Activated CD4-positive, alpha-beta T cell treated with anti-CD3 and anti-CD28 coated beads for 36 hours (primary cell): ENCODE measurements at regions of chr10 and their contacts with region 1.

Region 1: DNA sequence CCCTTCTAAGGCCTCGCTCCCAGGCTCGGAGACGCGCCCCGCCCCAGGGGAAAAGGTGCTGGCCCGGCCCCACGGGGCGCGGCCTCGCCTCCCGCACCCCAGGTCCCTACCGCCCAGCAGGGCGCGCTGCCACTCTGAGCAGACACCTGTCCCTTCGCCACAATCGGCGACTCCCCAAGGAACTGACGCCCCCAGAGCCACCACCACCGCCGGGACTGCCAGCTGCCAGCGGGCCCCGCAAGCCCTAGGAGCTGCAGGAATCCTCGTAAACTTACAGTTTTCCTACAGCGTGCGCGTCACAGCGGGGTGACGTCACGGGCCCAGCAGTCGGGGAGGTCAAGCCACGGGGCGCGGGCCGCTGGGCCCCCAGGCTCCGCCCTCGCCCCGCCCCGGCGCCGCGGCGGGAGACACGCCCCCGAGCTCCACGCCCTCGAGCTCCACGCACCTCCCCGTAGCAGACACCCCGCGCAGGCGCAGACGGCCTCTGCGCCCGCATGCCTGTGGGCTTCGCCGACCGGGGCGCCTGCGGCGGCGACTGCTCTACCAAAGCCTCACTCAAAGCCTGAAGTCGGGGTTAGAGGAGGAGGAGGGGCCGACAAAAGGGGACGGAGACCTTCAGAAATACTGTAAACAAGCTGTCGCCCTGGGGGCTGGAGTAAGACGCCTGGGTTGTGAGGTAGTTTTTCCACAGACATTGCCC is at the start of gene ZNF438:
- DNase-seq: peak; percentile 96
- ATAC-seq: peak; percentile 81
- H3K4me3 Mint-ChIP-seq: peak within 1 kb of the TSS; percentile 81
- H3K27ac Mint-ChIP-seq: peak within 1 kb of the TSS; percentile 99
- H3K4me1 Mint-ChIP-seq: peaks cover 19% of the 10 kb centered on the region
- H3K27me3 Mint-ChIP-seq: no peaks in the 10 kb centered on the region
- total RNA-seq, gene ZNF438: 3.1 to 3.7 TPM

Region 2: GRCh38 chr10:30701451-30702173 is 330.1 kb before region 1 on chr10:
- CTCF ChIA-PET with region 1: no interaction called
- POLR2A ChIA-PET with region 1: no interaction called
- intact Hi-C with region 1: loop called in 1 of 2 experiments (anchors 1 kb)
- DNase-seq: peak; percentile 93
- ATAC-seq: peak; percentile 73
- H3K4me3 Mint-ChIP-seq: peak overlapping the region; percentile 86
- H3K27ac Mint-ChIP-seq: peak overlapping the region; percentile 90
- H3K4me1 Mint-ChIP-seq: peaks cover 87% of the 10 kb centered on the region
- H3K27me3 Mint-ChIP-seq: no peaks in the 10 kb centered on the region

Region 3: DNA sequence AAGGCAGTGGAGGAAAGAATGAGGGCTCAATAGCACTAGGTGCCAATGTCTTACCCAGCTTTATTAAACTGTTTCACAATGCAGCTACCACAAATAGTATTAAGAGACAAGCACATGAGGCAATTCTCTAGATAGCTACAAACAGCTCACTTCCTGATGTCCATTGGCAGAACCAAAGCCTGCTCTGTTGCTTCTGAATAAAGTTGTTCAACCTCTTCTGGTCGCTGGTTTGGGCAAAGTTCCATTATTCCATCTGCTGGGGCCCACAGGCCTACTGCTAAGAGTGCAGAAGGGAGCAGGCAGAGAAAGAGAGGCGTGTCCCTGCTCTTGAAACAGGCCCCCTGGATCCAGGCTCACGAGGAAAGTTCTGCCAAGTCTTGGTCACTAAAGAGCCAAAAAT is 173.9 kb before region 1 on chr10:
- CTCF ChIA-PET with region 1: no interaction called
- POLR2A ChIA-PET with region 1: no interaction called
- intact Hi-C with region 1: no loop called
- DNase-seq: no peak
- ATAC-seq: no peak
- H3K4me3 Mint-ChIP-seq: no peak overlapping the region
- H3K27ac Mint-ChIP-seq: no peak overlapping the region
- H3K4me1 Mint-ChIP-seq: peaks cover 2% of the 10 kb centered on the region
- H3K27me3 Mint-ChIP-seq: no peaks in the 10 kb centered on the region

Region 4: GRCh38 chr10:31101123-31101522 is 69.4 kb after region 1 on chr10:
- CTCF ChIA-PET with region 1: no interaction called
- POLR2A ChIA-PET with region 1: interaction called, 9 read pairs
- intact Hi-C with region 1: loop called in 1 of 2 experiments (anchors 2 kb)
- DNase-seq: peak; percentile 86
- ATAC-seq: peak; percentile 96
- H3K4me3 Mint-ChIP-seq: no peak overlapping the region
- H3K27ac Mint-ChIP-seq: peak overlapping the region; percentile 91
- H3K4me1 Mint-ChIP-seq: peaks cover 44% of the 10 kb centered on the region
- H3K27me3 Mint-ChIP-seq: no peaks in the 10 kb centered on the region

Region 5: DNA sequence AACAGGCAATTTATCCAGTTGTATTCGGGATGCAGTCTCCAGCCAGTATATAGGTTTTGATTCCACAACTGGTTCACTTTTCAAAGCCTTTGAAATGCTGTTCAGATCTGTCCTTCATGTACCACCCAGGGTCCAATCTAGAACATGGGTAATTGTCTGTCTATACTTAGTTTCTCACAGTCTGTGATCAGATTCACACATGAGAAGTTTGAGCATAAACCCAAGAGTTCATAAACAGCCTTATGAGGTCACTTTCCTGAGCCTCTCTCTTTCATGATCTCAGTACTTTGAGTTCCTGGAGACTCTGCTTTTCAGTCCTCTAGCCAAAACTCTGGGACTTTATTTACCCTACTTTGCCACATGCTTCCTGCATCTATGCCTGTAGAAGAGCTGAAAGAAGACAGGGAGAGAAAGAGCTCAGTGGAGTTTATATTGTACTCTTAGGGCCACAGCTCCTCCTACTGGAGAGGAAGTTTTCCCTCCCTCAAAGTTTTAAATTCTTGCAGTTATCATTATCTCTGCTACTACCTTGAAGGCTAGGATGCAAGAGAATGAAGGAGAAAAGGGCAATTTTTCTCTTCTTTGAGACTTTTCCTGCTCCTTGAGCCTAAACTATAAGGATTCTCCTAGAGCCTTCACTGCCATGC is 459.3 kb after region 1 on chr10:
- CTCF ChIA-PET with region 1: no interaction called
- POLR2A ChIA-PET with region 1: no interaction called
- intact Hi-C with region 1: loop called in 1 of 2 experiments (anchors 5 kb)
- DNase-seq: peak; percentile 32
- ATAC-seq: peak; percentile 51
- H3K4me3 Mint-ChIP-seq: no peak overlapping the region
- H3K27ac Mint-ChIP-seq: no peak overlapping the region
- H3K4me1 Mint-ChIP-seq: peaks cover 2% of the 10 kb centered on the region
- H3K27me3 Mint-ChIP-seq: no peaks in the 10 kb centered on the region

Region 6: GRCh38 chr10:31707093-31708039 is 675.7 kb after region 1 on chr10:
- CTCF ChIA-PET with region 1: no interaction called
- POLR2A ChIA-PET with region 1: interaction called, 3 read pairs
- intact Hi-C with region 1: loop called in 1 of 2 experiments (anchors 5 kb)
- DNase-seq: peak; percentile 81
- ATAC-seq: peak; percentile 95
- H3K4me3 Mint-ChIP-seq: no peak overlapping the region
- H3K27ac Mint-ChIP-seq: peak overlapping the region; percentile 83
- H3K4me1 Mint-ChIP-seq: peaks cover 24% of the 10 kb centered on the region
- H3K27me3 Mint-ChIP-seq: no peaks in the 10 kb centered on the region

Region 7: DNA sequence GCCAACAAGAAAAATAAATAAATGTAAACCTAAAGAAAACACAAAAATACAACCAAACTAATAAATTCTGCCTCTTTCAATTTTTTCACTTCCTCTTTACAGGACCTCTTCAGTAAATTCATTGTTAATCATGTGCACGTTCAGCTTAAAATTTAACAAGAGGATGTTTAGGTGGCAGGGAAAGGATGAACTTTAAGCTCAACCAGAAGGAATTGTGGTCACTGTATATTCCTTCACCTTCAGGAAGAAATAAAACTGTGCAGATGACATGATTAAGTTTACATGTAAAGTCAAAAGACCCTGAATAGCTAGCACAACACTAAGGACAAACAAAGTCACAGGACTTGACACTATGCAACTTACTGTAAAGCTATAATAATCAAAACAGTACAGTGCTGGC is 991.6 kb after region 1 on chr10:
- CTCF ChIA-PET with region 1: no interaction called
- POLR2A ChIA-PET with region 1: no interaction called
- intact Hi-C with region 1: no loop called
- DNase-seq: no peak
- ATAC-seq: no peak
- H3K4me3 Mint-ChIP-seq: no peak overlapping the region
- H3K27ac Mint-ChIP-seq: peak overlapping the region; percentile 39
- H3K4me1 Mint-ChIP-seq: no peaks in the 10 kb centered on the region
- H3K27me3 Mint-ChIP-seq: no peaks in the 10 kb centered on the region